AG04449 (cell line): ENCODE measurements at regions of chr7 and their contacts with region 1.

Region 1: DNA sequence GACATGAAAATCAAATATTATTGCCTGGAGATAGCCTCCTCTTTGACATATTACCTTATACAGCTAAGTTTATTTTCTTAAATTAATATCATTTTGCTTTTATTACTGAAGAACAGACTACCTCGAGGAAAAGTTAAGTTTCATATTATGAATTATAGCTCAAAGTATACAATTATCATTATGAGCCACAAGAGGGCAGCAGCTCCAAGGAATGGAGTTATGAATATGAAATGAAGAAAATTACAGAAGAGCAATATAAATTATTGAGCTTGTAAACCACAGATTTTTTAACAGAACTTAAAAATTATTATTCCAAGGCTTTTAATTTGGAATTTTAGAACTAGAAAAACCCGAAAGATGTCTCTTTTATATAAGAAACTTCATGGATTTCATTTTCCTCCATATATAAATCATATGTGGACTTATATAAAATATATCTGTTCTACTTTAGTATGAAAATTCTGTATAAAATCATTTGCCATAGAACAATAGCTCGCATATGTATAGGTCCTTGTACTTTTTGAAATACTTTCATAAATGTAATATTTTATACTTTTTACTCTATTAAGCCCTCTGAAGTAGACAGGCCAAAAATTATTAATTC is 40.1 kb downstream of the IQUB start:
- DNase-seq: no peak
- H3K4me3 ChIP-seq: no peak overlapping the region
- CTCF ChIP-seq: peak; percentile 34

Region 2: DNA sequence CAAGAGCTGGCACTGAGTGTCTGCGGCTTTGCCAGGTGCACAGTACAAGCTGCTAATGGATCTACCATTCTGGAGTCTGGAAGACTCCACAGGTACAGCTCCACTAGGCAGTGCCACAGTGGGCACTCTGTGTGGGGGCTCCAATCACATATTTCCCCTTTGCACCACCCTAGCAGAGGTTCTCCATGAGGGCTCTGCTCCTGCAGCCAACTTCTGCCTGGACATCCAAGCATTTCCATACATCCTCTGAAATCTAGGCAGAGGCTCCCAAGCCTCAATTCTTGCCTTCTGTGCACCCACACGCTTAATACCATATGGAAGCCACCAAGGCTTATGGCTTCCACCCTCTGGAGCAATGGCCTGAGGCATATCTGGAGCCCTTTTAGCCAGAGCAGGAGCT is 10.9 kb after region 1 on chr7:
- CTCF ChIA-PET with region 1: interaction called, 10 read pairs
- POLR2A ChIA-PET with region 1: no interaction called
- DNase-seq: no peak
- H3K4me3 ChIP-seq: no peak overlapping the region
- CTCF ChIP-seq: no peak

Region 3: GRCh38 chr7:123534383-123535260 is 40.3 kb after region 1 on chr7 and contains the start of gene IQUB:
- CTCF ChIA-PET with region 1: interaction called, 26 read pairs
- POLR2A ChIA-PET with region 1: no interaction called
- DNase-seq: peak; percentile 76
- H3K4me3 ChIP-seq: peak within 1 kb of the TSS; percentile 69
- CTCF ChIP-seq: no peak